ENCODE measurements at regions of chr20 and their contacts with region 1.

Region 1: DNA sequence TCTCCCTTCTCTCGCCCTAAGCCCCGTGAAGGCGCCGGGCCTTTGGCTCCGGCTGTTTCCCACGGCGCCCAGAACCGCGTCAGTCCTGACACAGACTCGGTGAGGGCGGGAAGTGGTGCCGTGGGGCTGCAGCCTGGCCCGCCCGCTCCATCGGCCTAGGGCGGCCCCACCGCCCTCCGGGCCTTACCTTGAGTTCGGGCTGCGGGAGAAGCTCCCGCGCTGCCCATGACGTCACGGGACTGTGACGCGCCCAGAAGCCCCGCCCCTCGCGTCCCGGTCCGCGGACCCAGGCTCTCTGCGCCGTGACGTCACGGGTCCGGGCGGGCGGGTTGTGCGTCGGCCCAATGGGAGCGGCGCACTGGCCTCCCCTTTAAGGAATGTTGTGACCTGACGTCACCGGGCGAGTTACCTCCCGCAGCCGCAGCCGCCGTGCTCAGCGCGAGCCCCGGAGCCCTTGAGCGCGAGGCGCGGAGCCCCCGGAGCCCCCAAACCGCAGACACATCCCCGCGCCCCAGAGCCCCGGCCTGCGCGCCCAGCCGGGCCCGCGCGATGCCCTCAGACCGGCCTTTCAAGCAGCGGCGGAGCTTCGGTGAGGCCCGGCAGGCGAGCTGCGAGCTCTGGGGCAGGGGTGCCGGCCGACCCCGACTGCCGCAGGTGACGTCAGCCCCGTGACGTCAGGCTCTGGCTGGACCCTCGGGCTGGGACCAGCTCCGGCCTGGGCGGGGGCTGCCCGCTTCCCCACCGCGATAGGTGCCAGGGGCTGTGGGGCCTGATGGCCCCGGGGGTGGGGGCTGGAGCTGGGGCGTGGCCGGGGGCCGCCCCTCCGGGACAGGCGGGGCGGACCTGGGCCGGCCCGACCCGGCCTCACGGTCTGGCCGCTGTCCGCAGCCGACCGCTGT is at the start of gene MAP1LC3A:
- DNase-seq: peak; percentile 93 to 96 (median 94)
- H3K4me3 ChIP-seq: peak within 1 kb of the TSS; percentile 45 to 46
- H3K4me3 Mint-ChIP-seq: peak within 1 kb of the TSS; percentile 70 to 93 (median 84)
- H3K27ac ChIP-seq: peak within 1 kb of the TSS; percentile 95
- H3K27ac Mint-ChIP-seq: peak within 1 kb of the TSS; percentile 91 to 100 (median 96)
- H3K4me1 ChIP-seq: peaks cover 12% of the 10 kb centered on the region
- H3K4me1 Mint-ChIP-seq: peaks cover 10 to 33% (median 13%) of the 10 kb centered on the region in 4 donors
- H3K27me3 ChIP-seq: no peaks in the 10 kb centered on the region
- H3K27me3 Mint-ChIP-seq: no peaks in the 10 kb centered on the region
- total RNA-seq, gene MAP1LC3A: 2.1 to 2.8 TPM

Region 2: GRCh38 chr20:34363062-34363464 is 195.5 kb before region 1 on chr20 and contains the start of gene ITCH:
- CTCF ChIA-PET with region 1: no interaction called
- POLR2A ChIA-PET with region 1: no interaction called
- intact Hi-C with region 1: loop called (anchors 1 kb)
- DNase-seq: peak; percentile 88 to 93 (median 89)
- H3K4me3 ChIP-seq: peak within 1 kb of the TSS; percentile 73 to 89
- H3K4me3 Mint-ChIP-seq: peak within 1 kb of the TSS; percentile 94 to 100 (median 98)
- H3K27ac ChIP-seq: peak within 1 kb of the TSS; percentile 78
- H3K27ac Mint-ChIP-seq: peak within 1 kb of the TSS; percentile 92 to 99 (median 99)
- H3K4me1 ChIP-seq: peaks cover 50% of the 10 kb centered on the region
- H3K4me1 Mint-ChIP-seq: peaks cover 21 to 51% (median 35%) of the 10 kb centered on the region in 4 donors
- H3K27me3 ChIP-seq: no peaks in the 10 kb centered on the region
- H3K27me3 Mint-ChIP-seq: peaks cover 0 to 1% of the 10 kb centered on the region in 2 donors
- total RNA-seq, gene ITCH: 59.3 to 68.9 TPM

Region 3: DNA sequence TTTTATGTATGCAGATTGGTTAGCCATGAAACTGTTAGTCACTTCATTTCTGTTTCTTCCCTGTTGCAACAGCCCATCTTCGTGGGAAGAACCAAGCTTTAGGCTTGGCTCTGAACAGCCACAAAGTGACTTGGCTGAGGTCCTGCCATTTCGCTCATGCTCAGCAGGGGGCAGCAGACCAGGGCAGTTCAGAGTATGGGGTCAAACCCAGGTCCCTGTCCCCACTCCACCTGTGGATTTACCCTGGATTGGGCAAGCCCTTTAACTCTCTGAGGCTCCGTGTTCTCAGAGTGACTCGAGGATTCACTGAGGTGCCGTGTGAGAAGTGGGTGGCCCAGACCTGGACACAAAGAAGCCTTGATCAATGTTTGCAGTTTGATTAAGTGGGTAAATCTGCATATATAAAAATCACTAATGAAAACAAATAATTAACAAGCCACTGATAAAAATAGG is 19.9 kb before region 1 on chr20:
- CTCF ChIA-PET with region 1: interaction called, 20 read pairs
- POLR2A ChIA-PET with region 1: interaction called, 3 read pairs
- intact Hi-C with region 1: no loop called
- DNase-seq: peak in 3 of 5 donors; percentile 41 to 50 (median 47)
- H3K4me3 ChIP-seq: no peak overlapping the region
- H3K4me3 Mint-ChIP-seq: no peak overlapping the region
- H3K27ac ChIP-seq: no peak overlapping the region
- H3K27ac Mint-ChIP-seq: peak overlapping the region; percentile 29 to 73 (median 63)
- H3K4me1 ChIP-seq: peaks cover 34% of the 10 kb centered on the region
- H3K4me1 Mint-ChIP-seq: peaks cover 20 to 43% (median 33%) of the 10 kb centered on the region in 4 donors
- H3K27me3 ChIP-seq: no peaks in the 10 kb centered on the region
- H3K27me3 Mint-ChIP-seq: no peaks in the 10 kb centered on the region

Region 4: GRCh38 chr20:34676642-34677373 is 118.2 kb after region 1 on chr20 and contains the start of gene PIGU:
- CTCF ChIA-PET with region 1: no interaction called
- POLR2A ChIA-PET with region 1: interaction called, 3 read pairs
- intact Hi-C with region 1: loop called (anchors 1 kb)
- DNase-seq: peak; percentile 94 to 96 (median 96)
- H3K4me3 ChIP-seq: peak within 1 kb of the TSS; percentile 57 to 67
- H3K4me3 Mint-ChIP-seq: peak within 1 kb of the TSS; percentile 95 to 99 (median 97)
- H3K27ac ChIP-seq: peak within 1 kb of the TSS; percentile 66
- H3K27ac Mint-ChIP-seq: peak within 1 kb of the TSS; percentile 93 to 98 (median 97)
- H3K4me1 ChIP-seq: peaks cover 19% of the 10 kb centered on the region
- H3K4me1 Mint-ChIP-seq: peaks cover 11 to 25% (median 19%) of the 10 kb centered on the region in 4 donors
- H3K27me3 ChIP-seq: no peaks in the 10 kb centered on the region
- H3K27me3 Mint-ChIP-seq: no peaks in the 10 kb centered on the region
- total RNA-seq, gene PIGU: 15.1 to 18.2 TPM

Measured in CD4-positive, alpha-beta memory T cell (primary cell).